ENCODE measurements at regions of chr17 and their contacts with region 1.

Region 1: GRCh38 chr17:68941761-68942160 is 13.4 kb downstream of the ABCA8 start:
- DNase-seq: no peak
- H3K4me3 ChIP-seq: no peak overlapping the region
- CTCF ChIP-seq: no peak

Region 2: GRCh38 chr17:68993112-68993511 is 51.4 kb after region 1 on chr17:
- in situ Hi-C with region 1: loop called (anchors 5 kb)
- DNase-seq: no peak
- H3K4me3 ChIP-seq: no peak overlapping the region
- CTCF ChIP-seq: no peak

Region 3: GRCh38 chr17:69170377-69170776 is 228.6 kb after region 1 on chr17:
- in situ Hi-C with region 1: no loop called
- DNase-seq: no peak
- H3K4me3 ChIP-seq: no peak overlapping the region
- CTCF ChIP-seq: no peak